Ovary (tissue), 10 donors: ENCODE measurements at regions of chr10 and their contacts with region 1.

Region 1: GRCh38 chr10:18214691-18215563 is 74.7 kb downstream of the CACNB2 start:
- DNase-seq: peak; percentile 64 to 80 (median 69)
- H3K4me3 ChIP-seq: no peak overlapping the region
- H3K27ac ChIP-seq: peak overlapping the region in 1 of 2 donors; percentile 65
- H3K4me1 ChIP-seq: peaks cover 2% of the 10 kb centered on the region
- H3K27me3 ChIP-seq: no peaks in the 10 kb centered on the region
- CTCF ChIP-seq: peak; percentile 75 to 86 (median 84)
- EP300 ChIP-seq: no peak
- POLR2A ChIP-seq: no peak

Region 2: GRCh38 chr10:17816199-17816598 is 398.7 kb before region 1 on chr10:
- intact Hi-C with region 1: no loop called
- DNase-seq: no peak
- H3K4me3 ChIP-seq: no peak overlapping the region
- H3K27ac ChIP-seq: no peak overlapping the region
- H3K4me1 ChIP-seq: no peaks in the 10 kb centered on the region
- H3K27me3 ChIP-seq: no peaks in the 10 kb centered on the region
- CTCF ChIP-seq: no peak
- EP300 ChIP-seq: no peak
- POLR2A ChIP-seq: no peak

Region 3: GRCh38 chr10:17910125-17910789 is 304.7 kb before region 1 on chr10:
- intact Hi-C with region 1: loop called in 2 of 4 experiments (anchors 10 kb)
- DNase-seq: peak; percentile 27 to 51 (median 35)
- H3K4me3 ChIP-seq: no peak overlapping the region
- H3K27ac ChIP-seq: no peak overlapping the region
- H3K4me1 ChIP-seq: peaks cover 2% of the 10 kb centered on the region
- H3K27me3 ChIP-seq: no peaks in the 10 kb centered on the region
- CTCF ChIP-seq: peak in 2 of 3 donors; percentile 18 to 29
- EP300 ChIP-seq: no peak
- POLR2A ChIP-seq: no peak

Region 4: DNA sequence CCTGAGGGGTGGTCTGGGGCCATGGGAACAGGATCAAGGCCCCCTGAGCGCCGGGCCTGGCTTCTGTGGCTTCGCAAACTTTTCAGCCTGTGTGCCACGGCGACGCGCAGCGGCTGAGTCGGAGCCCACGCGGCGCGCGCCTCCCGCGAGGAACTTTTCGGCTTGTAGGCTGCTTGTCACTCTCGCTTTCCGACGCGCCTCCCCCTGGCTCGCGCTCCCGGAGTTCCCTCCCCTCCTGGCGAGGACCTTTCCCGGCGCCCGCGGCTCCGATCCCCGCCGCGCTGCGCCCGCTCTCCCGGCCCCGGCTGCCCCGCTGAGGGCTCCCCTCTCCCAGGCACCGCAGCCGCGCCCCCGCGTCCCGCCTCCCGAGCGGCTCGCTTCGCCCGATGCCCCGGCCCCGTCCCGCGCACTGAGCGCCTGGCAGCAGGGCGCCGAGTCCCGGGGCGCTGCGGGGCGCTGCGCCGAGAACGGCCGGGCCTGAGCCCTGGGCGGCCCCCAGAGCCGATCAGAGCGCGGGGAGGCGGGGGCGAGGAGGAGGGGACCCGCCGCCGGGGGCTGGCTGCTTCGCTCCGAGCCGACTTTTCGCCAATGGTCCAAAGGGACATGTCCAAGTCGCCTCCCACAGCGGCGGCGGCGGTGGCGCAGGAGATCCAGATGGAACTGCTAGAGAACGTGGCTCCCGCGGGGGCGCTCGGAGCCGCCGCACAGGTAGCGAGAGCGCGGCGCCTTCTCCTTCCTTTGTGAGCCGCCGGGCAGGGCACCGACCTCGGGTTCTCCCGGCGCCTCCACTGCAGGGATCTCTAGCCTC is 74.6 kb before region 1 on chr10 and contains the start of gene CACNB2:
- intact Hi-C with region 1: loop called in 2 of 4 experiments (anchors 5 to 10 kb)
- DNase-seq: peak; percentile 88 to 91 (median 88)
- H3K4me3 ChIP-seq: peak within 1 kb of the TSS; percentile 66
- H3K27ac ChIP-seq: peak within 1 kb of the TSS; percentile 87 to 99
- H3K4me1 ChIP-seq: no peaks in the 10 kb centered on the region
- H3K27me3 ChIP-seq: no peaks in the 10 kb centered on the region
- CTCF ChIP-seq: peak in 1 of 3 donors; percentile 9
- EP300 ChIP-seq: no peak
- POLR2A ChIP-seq: peak; percentile 62
- total RNA-seq, gene CACNB2: 16.0 to 60.9 (median 25.7) TPM